Right ventricle myocardium inferior (tissue), 1 donor: ENCODE measurements at regions of chr4 and their contacts with region 1.

Region 1: GRCh38 chr4:16858275-16858752 is 40.1 kb downstream of the LDB2 start:
- DNase-seq: no peak
- ATAC-seq: peak; percentile 16

Region 2: DNA sequence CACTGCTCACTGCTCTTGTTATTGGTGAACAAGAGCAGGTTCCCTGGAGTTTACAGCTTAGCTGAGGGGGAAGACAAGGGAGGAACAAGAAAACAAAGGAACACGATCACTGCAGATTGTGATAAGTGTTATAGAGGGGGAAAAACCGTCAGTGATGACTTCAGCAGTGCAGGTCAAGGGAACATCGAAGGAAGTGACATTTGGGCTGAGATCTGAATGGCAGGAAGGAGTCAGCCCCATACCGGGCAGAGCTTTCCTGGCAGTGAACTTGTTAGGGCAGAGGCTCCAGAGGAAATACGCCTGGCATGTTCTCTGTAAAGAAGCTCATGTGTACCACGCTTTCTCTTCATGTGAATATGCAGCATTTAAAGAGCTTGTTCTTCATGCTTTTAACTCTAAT is 38.0 kb before region 1 on chr4:
- intact Hi-C with region 1: loop called (anchors 1 kb)
- DNase-seq: no peak
- ATAC-seq: no peak

Region 3: DNA sequence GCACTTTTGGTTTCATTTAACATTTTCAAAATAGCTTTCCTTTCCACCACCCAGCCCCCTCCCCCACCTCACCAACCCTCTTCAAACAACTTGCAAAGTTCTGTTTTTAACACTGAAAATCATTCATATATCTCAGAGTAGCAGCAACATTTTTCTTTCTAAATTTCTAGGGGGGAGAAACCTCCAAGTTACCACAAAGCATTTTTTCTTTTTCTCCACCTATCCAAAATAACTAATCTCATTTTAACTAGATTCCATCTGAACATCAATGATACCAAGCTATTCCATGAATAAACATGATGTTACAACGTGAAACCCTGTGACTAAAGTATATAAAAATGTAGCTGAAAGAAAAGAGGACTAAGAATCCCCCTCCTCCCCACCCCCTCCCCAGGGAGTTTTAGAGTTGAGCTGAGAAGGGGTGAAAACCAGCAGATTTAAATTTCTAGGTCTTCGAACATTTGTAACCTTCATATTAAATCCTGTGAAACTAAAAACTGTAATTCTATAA is 34.9 kb after region 1 on chr4:
- intact Hi-C with region 1: loop called (anchors 5 kb)
- DNase-seq: no peak
- ATAC-seq: no peak